Motor neuron (in vitro differentiated cells): ENCODE measurements at regions of chr17 and their contacts with region 1.

Region 1: GRCh38 chr17:27072885-27073284 is 221.0 kb upstream of the WSB1 start:
- ATAC-seq: no peak
- H3K4me3 ChIP-seq: no peak overlapping the region
- H3K27ac ChIP-seq: no peak overlapping the region
- H3K4me1 ChIP-seq: no peaks in the 10 kb centered on the region

Region 2: DNA sequence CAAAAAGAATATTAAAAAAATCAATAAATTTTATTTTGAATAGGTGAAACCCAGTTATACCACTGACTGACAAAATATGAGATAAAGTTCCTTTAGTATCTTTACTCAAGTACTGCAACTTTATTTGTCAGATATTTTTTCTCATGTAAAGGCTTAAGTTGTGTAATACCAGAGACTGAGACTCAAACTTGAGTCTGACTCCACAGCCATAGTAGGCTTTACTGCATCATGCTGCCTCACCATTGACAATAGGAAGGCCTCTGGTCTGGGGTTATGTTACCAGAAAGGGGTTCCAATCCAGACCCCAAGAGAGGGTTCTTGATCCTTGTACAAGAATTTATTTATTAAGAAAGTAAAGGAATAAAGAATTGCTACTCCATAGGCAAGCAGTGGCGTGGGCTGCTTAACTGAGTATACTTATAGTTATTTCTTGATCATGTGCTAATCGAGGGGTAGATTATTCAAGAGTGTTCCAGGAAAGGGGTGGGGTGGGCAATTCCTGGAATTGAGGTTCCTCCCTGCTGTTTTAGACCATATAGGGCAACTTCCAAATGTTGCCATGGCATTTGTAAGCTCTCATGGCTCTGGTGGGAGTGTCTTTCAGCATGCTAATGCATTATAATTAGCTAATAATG is 33.6 kb after region 1 on chr17:
- in situ Hi-C with region 1: loop called in 1 of 9 experiments (anchors 10 kb)
- ATAC-seq: peak in 3 of 8 experiments; percentile 59 to 95 (median 93)
- H3K4me3 ChIP-seq: no peak overlapping the region
- H3K27ac ChIP-seq: no peak overlapping the region
- H3K4me1 ChIP-seq: no peaks in the 10 kb centered on the region

Region 3: GRCh38 chr17:27153005-27153404 is 80.1 kb after region 1 on chr17:
- in situ Hi-C with region 1: loop called in 1 of 9 experiments (anchors 25 kb)
- ATAC-seq: no peak
- H3K4me3 ChIP-seq: no peak overlapping the region
- H3K27ac ChIP-seq: no peak overlapping the region
- H3K4me1 ChIP-seq: no peaks in the 10 kb centered on the region